Right lobe of liver (tissue), 6 donors: ENCODE measurements at regions of chr6 and their contacts with region 1.

Region 1: GRCh38 chr6:3057063-3057770 is 11.1 kb upstream of the RIPK1 start:
- DNase-seq: no peak
- ATAC-seq: no peak
- H3K4me3 ChIP-seq: no peak overlapping the region
- H3K27ac ChIP-seq: no peak overlapping the region
- H3K4me1 ChIP-seq: peaks cover 0 to 3% (median 0%) of the 10 kb centered on the region in 4 donors
- H3K27me3 ChIP-seq: no peaks in the 10 kb centered on the region
- CTCF ChIP-seq: no peak
- POLR2A ChIP-seq: no peak

Region 2: DNA sequence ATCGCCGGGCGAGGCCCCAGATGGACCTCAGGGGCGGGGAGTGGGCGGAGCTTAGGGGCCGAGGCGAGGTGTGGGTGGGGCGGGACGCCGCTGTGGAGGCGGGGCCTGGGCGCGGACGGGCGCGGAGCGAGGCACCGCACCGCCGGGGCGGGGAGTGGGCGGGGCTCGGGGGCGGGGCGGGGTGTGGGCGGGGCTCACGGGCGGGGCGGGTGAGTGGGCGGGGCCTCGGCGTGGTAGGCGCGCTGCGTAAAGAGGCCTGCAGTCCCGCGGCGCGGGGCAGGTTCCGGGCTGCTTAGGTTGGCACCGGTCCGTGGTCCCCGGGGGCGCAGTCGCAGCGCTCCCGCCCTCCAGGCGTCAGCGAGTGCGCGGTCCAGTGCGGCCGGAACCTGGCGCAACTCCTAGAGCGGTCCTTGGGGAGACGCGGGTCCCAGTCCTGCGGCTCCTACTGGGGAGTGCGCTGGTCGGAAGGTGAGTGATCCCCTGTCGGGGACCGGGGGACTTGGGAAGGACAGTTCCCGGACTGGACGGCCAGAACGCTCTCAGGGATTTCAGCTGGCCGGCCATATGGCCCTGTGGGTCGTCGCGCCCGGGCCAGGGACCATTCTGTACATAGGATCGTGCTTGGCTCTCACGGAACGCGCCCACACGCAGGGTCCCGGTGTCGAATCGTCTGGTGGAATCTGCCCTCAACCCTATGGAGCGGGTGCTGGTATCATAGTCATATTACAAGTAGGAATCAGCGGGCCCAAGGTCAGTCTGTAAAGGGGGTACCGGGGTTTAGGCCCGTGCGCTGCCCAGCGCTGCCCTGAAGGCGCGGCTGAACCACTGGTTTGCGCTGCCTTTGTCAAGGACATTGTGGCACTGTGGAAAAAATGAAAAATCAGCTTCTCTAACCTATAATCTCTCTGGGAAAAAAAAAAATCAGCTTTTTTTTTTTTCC is 57.3 kb before region 1 on chr6 and contains the start of gene NQO2:
- intact Hi-C with region 1: loop called in 1 of 2 experiments (anchors 5 kb)
- DNase-seq: peak; percentile 97 to 98 (median 97)
- ATAC-seq: peak; percentile 80 to 92 (median 86)
- H3K4me3 ChIP-seq: peak within 1 kb of the TSS; percentile 85 to 92 (median 90)
- H3K27ac ChIP-seq: peak within 1 kb of the TSS; percentile 89 to 96 (median 95)
- H3K4me1 ChIP-seq: peaks cover 0 to 32% (median 11%) of the 10 kb centered on the region in 4 donors
- H3K27me3 ChIP-seq: no peaks in the 10 kb centered on the region
- CTCF ChIP-seq: no peak
- POLR2A ChIP-seq: peak; percentile 92
- total RNA-seq, gene NQO2: 44.5 to 74.2 (median 67.3) TPM